PC-9 (cell line): ENCODE measurements at regions of chr6 and their contacts with region 1.

Region 1: DNA sequence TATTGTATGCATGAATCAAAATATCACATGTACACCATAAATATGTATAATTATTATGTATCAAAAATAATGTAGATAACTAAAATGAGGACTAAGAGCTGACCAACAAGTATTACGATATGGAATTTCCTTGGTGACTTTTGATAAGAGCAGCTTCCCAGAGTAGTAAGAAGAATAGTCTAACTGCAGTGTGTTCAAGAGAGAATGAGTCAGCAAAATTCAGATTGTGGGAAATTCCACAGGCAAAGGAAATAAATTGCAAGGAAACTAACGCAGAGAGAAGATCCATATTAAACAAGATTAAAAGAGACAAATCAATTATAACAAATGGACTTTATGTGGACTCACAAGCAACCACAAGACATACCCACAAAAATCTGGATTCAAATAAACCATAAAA is 26.4 kb downstream of the FRK start:
- DNase-seq: no peak
- H3K4me3 ChIP-seq: no peak overlapping the region
- H3K27ac ChIP-seq: peak overlapping the region; percentile 62
- H3K4me1 ChIP-seq: peaks cover 36% of the 10 kb centered on the region
- H3K27me3 ChIP-seq: no peaks in the 10 kb centered on the region
- CTCF ChIP-seq: no peak

Region 2: DNA sequence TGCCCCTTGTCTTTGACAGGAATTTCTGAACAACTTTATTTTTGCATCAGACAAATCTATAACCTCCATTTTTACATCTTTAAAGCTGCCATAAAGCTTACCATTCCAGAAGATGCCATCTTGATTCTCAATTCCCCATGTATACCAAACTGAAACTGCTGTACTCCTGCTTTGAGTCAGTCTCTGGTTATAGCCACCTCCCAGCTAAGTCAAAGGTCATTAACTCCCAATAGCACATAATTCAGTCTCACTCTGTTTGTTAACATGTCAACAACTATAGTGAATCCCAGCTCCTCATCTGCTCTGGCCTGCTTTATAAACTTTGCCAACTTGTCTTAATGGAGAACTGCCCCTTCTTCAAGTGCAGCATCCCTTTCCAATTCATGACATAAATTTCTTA is 317.3 kb before region 1 on chr6:
- CTCF ChIA-PET with region 1: no interaction called
- POLR2A ChIA-PET with region 1: no interaction called
- intact Hi-C with region 1: no loop called
- DNase-seq: no peak
- H3K4me3 ChIP-seq: no peak overlapping the region
- H3K27ac ChIP-seq: no peak overlapping the region
- H3K4me1 ChIP-seq: no peaks in the 10 kb centered on the region
- H3K27me3 ChIP-seq: no peaks in the 10 kb centered on the region
- CTCF ChIP-seq: no peak

Region 3: DNA sequence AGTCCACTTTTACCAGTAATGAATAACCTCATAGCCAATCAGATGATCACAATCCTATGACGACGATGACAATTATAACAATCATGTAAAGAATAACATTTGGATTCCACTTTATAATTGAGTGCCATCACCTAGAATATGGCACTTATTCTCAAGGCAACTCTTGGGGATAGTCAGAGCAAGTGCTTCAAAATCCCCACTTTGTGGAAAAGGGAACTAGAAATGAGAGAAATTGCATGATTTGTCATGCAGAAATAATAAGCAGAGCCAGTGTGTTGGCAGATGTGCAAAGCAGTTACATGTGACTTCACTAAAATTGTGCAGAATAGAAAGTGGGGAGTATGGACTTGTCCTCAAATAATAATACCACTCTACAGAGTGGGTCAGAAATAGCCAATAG is 14.9 kb before region 1 on chr6:
- CTCF ChIA-PET with region 1: interaction called, 12 read pairs
- POLR2A ChIA-PET with region 1: no interaction called
- intact Hi-C with region 1: no loop called
- DNase-seq: no peak
- H3K4me3 ChIP-seq: no peak overlapping the region
- H3K27ac ChIP-seq: no peak overlapping the region
- H3K4me1 ChIP-seq: peaks cover 30% of the 10 kb centered on the region
- H3K27me3 ChIP-seq: no peaks in the 10 kb centered on the region
- CTCF ChIP-seq: no peak